Activated B cell treated with CpG ODN at 0.5 μM for 24 hours (primary cell): ENCODE measurements at regions of chr6 and their contacts with region 1.

Region 1: GRCh38 chr6:74574794-74575193 is 631.1 kb downstream of the COL12A1 start:
- DNase-seq: no peak
- ATAC-seq: no peak
- H3K4me3 Mint-ChIP-seq: no peak overlapping the region
- H3K27ac Mint-ChIP-seq: no peak overlapping the region
- H3K4me1 Mint-ChIP-seq: no peaks in the 10 kb centered on the region
- H3K27me3 Mint-ChIP-seq: no peaks in the 10 kb centered on the region
- CTCF ChIP-seq: no peak

Region 2: DNA sequence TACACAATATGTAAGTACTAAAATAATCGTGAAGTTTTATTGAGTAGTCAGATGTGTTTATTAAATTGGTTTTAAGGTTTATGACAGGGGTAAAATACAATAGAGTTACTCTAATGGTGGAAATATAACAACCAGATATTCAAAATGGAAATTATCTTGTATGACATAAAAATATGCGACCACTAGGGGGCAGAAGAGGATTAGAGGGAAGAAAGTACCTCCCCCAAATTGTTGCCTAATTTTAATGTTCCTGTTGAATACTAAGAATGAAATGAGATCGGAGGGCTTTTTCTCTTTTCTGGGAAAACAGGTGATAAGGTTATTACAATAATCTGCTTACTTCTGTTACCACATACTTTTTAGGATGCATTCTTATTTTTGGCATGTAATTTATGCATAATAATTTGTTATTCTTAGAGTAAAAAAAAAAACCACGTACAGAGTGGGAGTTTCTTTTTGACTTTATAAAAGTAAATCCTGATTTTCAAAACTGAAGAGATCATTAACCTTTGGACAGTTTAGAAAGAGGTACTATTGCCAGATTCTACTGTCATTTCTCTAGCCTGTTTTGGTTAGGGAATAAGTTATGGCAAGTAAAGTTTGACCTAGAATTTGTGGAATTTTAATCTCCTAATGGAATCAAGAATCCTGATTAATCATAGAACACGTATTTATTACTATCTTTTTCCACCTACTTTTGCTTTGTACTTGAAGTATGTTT is 719.6 kb before region 1 on chr6:
- CTCF ChIA-PET with region 1: no interaction called
- POLR2A ChIA-PET with region 1: no interaction called
- intact Hi-C with region 1: loop called (anchors 10 kb)
- DNase-seq: no peak
- ATAC-seq: no peak
- H3K4me3 Mint-ChIP-seq: no peak overlapping the region
- H3K27ac Mint-ChIP-seq: no peak overlapping the region
- H3K4me1 Mint-ChIP-seq: no peaks in the 10 kb centered on the region
- H3K27me3 Mint-ChIP-seq: no peaks in the 10 kb centered on the region
- CTCF ChIP-seq: peak; percentile 28

Region 3: DNA sequence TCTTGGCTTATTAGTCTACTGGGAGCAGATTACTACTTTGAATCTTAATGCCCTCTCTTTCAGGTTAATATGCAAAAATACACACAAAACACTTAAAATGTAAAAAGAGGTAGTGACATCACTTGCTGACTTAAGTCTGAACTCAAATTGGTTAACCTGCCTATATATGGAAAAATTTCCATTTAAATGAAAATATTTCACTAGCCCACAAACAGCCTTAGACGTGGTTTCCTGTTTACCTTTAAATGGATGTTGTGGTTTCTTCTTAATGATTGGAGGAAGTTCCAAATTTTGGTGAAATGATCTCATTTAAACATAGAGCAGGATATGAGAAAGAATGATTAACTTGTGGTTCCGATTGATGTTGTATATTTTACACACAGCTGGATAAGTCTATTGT is 325.1 kb before region 1 on chr6:
- CTCF ChIA-PET with region 1: no interaction called
- POLR2A ChIA-PET with region 1: no interaction called
- intact Hi-C with region 1: no loop called
- DNase-seq: no peak
- ATAC-seq: no peak
- H3K4me3 Mint-ChIP-seq: no peak overlapping the region
- H3K27ac Mint-ChIP-seq: no peak overlapping the region
- H3K4me1 Mint-ChIP-seq: no peaks in the 10 kb centered on the region
- H3K27me3 Mint-ChIP-seq: no peaks in the 10 kb centered on the region
- CTCF ChIP-seq: no peak

Region 4: GRCh38 chr6:74312081-74312480 is 262.7 kb before region 1 on chr6:
- CTCF ChIA-PET with region 1: no interaction called
- POLR2A ChIA-PET with region 1: no interaction called
- intact Hi-C with region 1: no loop called
- DNase-seq: no peak
- ATAC-seq: no peak
- H3K4me3 Mint-ChIP-seq: no peak overlapping the region
- H3K27ac Mint-ChIP-seq: no peak overlapping the region
- H3K4me1 Mint-ChIP-seq: no peaks in the 10 kb centered on the region
- H3K27me3 Mint-ChIP-seq: no peaks in the 10 kb centered on the region
- CTCF ChIP-seq: no peak